Stomach (tissue), 19 donors: ENCODE measurements at regions of chr16 and their contacts with region 1.

Region 1: GRCh38 chr16:35795361-35796029 is 2336.1 kb downstream of the TP53TG3F start:
- DNase-seq: no peak
- H3K4me3 ChIP-seq: no peak overlapping the region
- H3K27ac ChIP-seq: no peak overlapping the region
- H3K4me1 ChIP-seq: no peaks in the 10 kb centered on the region
- H3K27me3 ChIP-seq: no peaks in the 10 kb centered on the region
- CTCF ChIP-seq: no peak
- EP300 ChIP-seq: no peak
- POLR2A ChIP-seq: no peak

Region 2: DNA sequence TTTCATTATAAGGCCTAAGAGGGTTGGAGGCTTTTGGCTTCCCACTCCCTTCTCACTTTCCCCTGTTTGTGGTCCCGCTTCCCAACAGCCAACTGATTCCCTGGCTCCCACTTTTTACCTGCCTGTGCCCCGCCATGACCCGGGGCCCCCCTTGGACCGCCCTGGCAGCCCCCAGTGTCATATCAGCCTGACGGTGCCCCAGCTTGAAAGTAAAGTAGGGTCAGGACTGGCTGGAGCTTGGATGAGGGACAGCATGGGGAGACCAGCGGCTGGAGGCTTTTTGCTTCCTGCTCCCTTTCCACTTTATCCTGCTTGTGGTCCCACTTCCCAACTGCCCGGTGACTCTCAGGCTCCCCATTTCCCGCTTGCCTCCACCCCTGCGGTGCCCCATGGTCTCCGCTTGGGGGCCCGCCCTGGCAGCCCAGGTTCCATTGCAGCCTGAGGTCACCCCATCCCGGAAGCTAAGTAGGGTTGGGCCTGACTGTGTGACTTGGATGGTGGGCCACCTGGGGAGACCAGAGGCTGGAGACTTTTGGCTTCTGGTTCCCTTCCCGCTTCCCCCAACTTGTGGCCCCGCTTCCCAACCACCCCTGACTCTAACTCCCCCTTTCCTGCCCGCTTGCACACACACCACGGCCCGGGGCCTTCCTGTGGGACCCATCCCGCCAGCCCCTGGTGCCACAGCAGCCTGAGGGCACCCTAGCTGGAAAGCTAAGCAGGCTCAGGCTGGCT is 61.4 kb before region 1 on chr16:
- intact Hi-C with region 1: loop called (anchors 10 kb)
- DNase-seq: no peak
- H3K4me3 ChIP-seq: no peak overlapping the region
- H3K27ac ChIP-seq: no peak overlapping the region
- H3K4me1 ChIP-seq: no peaks in the 10 kb centered on the region
- H3K27me3 ChIP-seq: no peaks in the 10 kb centered on the region
- CTCF ChIP-seq: no peak
- EP300 ChIP-seq: no peak
- POLR2A ChIP-seq: no peak